AG04450 (cell line): ENCODE measurements at regions of chr5 and their contacts with region 1.

Region 1: DNA sequence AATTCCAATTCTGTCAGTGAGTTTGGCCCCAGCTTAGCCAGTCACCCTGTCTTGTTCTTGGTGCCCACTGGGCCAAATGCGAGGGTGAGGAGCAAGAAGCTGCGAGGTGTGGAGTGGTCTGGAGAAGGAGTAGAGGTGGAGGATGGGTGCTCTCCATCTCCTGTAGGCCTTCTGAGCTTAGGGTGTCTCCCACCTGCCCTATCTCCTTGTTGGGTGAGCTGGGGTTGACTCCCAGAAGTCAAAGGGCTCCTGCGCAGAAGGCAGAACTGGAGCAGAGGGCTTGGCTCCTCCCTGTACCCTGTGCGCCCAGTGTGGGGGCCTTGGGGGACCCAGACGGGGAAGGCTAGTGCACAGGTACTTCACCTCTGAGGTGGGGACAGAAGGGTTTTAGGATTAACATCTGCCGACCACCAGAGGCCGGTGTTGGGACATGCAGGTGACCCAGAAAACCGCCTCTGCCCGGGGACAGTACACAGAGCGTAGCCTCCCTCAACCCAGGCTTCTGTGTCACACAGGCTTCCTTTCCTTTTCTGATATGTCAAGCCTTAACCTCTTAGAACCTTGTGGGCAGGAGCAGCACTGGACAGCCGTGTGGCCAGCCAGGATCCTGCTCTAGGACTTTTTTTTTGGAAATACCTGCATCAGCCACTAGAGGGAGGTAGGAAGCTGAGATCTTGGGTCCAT is 16.9 kb downstream of the IL5 start:
- DNase-seq: no peak
- H3K4me3 ChIP-seq: peak overlapping the region; percentile 20; the same call in 1 of the 2 replicates
- H3K27ac ChIP-seq: no peak overlapping the region
- H3K27me3 ChIP-seq: peaks cover 10% of the 10 kb centered on the region
- CTCF ChIP-seq: peak; percentile 85

Region 2: DNA sequence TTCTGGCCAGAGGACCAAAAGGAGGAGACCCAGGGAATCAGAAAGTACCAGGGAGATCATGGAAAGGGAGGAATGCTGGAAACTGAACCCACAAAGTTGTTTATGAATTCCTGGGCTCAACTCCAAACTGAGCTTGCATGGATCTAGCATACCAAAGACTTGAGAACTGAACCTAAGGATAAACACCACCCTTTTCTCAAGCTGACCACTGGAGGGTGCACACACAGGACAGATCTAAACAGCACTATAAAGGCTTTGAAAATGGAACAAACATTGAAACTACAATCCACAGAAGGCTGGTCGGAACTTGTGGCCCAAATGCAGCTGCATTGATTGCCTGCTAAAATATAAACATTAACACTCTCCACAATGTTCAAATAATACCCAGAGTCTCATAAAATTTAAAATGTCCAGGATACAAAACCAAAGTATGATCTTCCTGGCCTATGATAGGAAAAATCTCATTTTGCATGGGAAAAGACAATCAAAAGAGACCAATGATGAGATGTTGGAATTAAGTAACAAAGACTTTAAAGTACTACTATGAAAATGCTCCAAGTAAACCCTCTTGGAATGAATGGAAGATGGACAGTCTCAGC is 20.2 kb before region 1 on chr5:
- CTCF ChIA-PET with region 1: interaction called, 31 read pairs
- POLR2A ChIA-PET with region 1: no interaction called
- DNase-seq: peak; percentile 96
- H3K4me3 ChIP-seq: peak overlapping the region; percentile 20
- H3K27ac ChIP-seq: peak overlapping the region; percentile 98
- H3K27me3 ChIP-seq: no peaks in the 10 kb centered on the region
- CTCF ChIP-seq: peak; percentile 85

Region 3: GRCh38 chr5:132540764-132541163 is 14.3 kb after region 1 on chr5:
- CTCF ChIA-PET with region 1: interaction called, 32 read pairs
- POLR2A ChIA-PET with region 1: no interaction called
- DNase-seq: no peak
- H3K4me3 ChIP-seq: no peak overlapping the region
- H3K27ac ChIP-seq: no peak overlapping the region
- H3K27me3 ChIP-seq: peaks cover 18% of the 10 kb centered on the region
- CTCF ChIP-seq: no peak